ENCODE measurements at regions of chr4 and their contacts with region 1.

Region 1: DNA sequence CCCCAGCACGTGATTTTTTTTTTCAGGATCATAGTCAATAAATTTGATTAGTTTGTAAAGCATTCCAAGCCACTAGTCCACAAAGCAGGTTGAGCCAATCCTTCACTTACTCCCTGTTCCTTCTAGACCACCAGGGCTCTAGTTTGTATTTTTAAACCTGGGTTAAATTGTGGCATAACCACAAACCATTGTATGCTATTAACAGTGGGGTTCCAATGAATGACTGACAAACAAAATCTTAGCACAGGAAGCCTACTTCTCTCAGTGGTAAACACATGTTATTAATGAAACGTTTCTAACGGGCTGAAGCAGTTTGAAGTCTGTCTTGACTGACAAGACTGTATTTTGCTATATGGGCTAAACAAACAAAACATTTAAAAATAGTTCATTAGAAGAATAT is 48.6 kb upstream of the GYPA start:
- DNase-seq: no peak
- CTCF ChIP-seq: no peak

Region 2: DNA sequence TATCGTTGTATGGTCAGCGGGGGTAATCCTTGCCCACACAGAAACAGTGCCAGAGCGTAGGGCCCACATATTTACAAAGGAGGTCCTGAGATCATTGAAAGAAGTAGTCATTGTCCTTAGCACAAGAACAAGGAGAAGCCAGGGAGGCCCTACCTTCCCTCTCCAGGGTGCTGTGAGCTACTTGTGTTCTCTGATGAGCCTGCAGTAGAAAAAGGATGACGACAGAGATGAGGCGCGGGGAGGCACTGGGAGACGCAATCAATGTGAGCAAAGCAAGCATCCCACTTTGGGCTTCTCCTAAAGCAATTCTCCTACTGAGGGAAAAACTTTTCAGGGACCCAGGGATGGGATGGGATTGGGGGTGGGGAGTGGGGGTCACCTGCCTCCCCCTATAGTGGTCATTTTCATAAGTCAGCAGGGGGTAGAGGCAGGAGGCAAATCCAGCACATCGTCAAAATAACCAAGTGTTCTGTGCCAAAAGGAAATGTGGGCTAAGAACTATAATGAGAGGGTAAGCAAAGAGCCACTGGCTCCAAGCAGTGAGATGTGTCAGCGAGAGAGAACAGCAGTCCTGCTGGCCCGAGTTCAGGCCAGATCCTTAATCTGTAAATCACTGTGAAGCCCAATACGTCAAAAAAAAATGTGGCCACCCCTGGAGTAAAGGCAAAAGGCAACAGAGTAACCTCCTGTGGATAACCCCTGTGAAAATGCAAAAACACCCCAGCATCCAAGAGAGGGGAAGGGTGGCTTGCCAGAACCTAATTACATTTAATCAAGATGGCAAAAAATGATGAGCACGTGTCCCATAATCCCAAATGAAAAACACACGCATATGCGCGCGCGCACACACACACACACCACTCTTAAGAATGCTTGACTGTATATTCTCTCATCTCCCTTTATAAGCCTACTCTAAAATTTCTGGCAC is 320.2 kb after region 1 on chr4:
- in situ Hi-C with region 1: no loop called
- DNase-seq: no peak
- CTCF ChIP-seq: no peak

Region 3: GRCh38 chr4:144575181-144575580 is 386.1 kb after region 1 on chr4:
- in situ Hi-C with region 1: loop called (anchors 10 kb)
- DNase-seq: no peak
- CTCF ChIP-seq: no peak